B cell (primary cell): ENCODE measurements at regions of chr15 and their contacts with region 1.

Region 1: DNA sequence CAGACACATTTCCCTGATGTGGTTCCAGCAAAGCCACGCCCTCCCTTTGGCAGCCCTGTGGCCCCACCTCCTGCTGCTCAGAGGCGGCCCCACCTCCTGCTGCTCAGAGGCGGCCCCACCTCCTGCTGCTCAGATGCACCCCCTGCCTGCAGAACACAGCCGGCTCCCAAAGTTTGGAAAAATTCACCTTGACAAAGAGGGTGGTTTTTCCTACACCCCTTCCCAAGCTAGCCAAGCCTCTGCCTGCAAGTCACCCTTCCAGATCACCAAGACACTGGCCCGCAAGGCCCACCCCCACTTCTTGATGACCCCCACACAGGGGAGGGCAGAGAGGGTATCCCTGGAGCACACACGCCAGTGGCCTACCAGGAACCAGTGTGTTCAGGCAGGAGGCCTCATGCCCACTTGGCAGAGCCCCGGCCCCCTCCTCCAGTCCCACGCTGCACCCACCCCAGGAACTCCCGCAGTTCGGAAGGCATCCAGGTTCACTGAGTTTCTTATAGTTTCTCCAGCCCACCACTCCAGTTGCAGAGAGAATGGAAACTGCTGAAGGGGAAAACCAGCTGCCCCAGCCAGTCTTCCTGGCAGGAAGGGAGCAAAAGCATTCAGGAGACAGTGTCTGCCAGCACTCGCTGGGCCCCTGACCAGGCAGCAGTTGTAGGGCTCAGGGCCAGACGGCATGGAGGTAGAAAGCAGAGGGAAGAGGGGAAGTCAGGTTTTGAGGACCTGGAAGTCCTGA is 2.3 kb upstream of the HAPLN3 start:
- DNase-seq: peak; percentile 44
- ATAC-seq: peak; percentile 70
- H3K4me3 ChIP-seq: no peak overlapping the region
- H3K4me3 Mint-ChIP-seq: no peak overlapping the region
- H3K27ac ChIP-seq: no peak overlapping the region
- H3K27ac Mint-ChIP-seq: no peak overlapping the region
- H3K4me1 ChIP-seq: peaks cover 12 to 22% of the 10 kb centered on the region in 2 donors
- H3K4me1 Mint-ChIP-seq: peaks cover 14% of the 10 kb centered on the region
- H3K27me3 ChIP-seq: peaks cover 0 to 15% (median 0%) of the 10 kb centered on the region in 4 experiments
- H3K27me3 Mint-ChIP-seq: peaks cover 8% of the 10 kb centered on the region
- CTCF ChIP-seq: no peak

Region 2: DNA sequence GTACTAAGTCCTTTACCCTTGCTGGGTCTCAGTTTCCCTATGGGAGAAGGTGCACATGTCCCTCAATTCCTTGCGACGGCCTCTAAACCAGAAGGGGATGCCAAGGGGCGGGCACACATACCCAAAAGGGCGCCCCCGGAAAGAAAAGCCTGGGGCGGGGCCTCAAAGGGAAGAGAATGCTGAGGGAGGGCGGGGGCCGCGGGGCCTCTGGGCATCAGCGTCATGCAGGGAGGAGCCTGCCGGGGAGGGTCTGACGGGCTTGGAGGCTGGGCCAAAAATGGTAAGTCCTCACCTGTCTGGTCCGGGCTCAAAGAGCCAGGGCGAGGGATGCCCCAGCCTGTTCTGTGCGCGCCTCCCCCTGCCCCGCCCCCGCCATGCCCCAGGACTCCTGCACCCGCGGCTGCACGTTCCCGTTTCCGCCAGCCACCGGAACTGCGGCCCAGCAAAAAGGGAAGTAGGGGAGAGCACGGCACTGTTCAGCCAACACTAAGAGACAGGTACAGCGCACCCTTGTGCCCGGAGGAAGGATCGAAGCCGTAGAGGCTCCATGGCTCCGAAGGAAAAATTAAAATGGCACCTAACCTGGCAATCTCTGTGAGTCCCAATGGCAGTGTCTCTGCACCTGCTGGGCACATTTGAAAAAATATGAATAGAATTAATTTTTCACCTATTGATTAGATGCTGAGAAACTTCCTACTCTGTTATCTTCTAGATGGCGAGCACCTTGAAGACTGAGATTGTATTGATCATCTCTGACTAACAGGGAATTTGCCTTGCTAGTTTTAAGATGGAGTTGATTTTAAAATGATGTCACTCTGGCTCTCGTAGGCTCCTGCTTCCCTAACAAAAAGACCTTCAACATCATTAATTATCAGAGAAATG is 351.1 kb before region 1 on chr15 and contains the start of gene DET1:
- CTCF ChIA-PET with region 1: no interaction called
- POLR2A ChIA-PET with region 1: no interaction called
- intact Hi-C with region 1: loop called (anchors 5 kb)
- DNase-seq: peak; percentile 96
- ATAC-seq: peak; percentile 89
- H3K4me3 ChIP-seq: peak within 1 kb of the TSS; percentile 63 to 81 (median 67)
- H3K4me3 Mint-ChIP-seq: peak within 1 kb of the TSS; percentile 96
- H3K27ac ChIP-seq: peak within 1 kb of the TSS; percentile 79 to 80
- H3K27ac Mint-ChIP-seq: peak within 1 kb of the TSS; percentile 97
- H3K4me1 ChIP-seq: peaks cover 4 to 6% of the 10 kb centered on the region in 2 donors
- H3K4me1 Mint-ChIP-seq: peaks cover 18% of the 10 kb centered on the region
- H3K27me3 ChIP-seq: no peaks in the 10 kb centered on the region
- H3K27me3 Mint-ChIP-seq: no peaks in the 10 kb centered on the region
- CTCF ChIP-seq: peak; percentile 76
- total RNA-seq, gene DET1: 10.1 and 14.1 TPM in 2 replicates

Region 3: GRCh38 chr15:88913017-88913849 is 15.6 kb after region 1 on chr15 and contains the start of gene MFGE8:
- CTCF ChIA-PET with region 1: interaction called, 6 read pairs
- POLR2A ChIA-PET with region 1: no interaction called
- intact Hi-C with region 1: loop called (anchors 1 kb)
- DNase-seq: peak; percentile 70
- ATAC-seq: peak; percentile 85
- H3K4me3 ChIP-seq: peak within 1 kb of the TSS; percentile 53 to 73 (median 59)
- H3K4me3 Mint-ChIP-seq: peak within 1 kb of the TSS; percentile 96
- H3K27ac ChIP-seq: no peak within 1 kb of the TSS
- H3K27ac Mint-ChIP-seq: peak within 1 kb of the TSS; percentile 75
- H3K4me1 ChIP-seq: peaks cover 4 to 15% of the 10 kb centered on the region in 2 donors
- H3K4me1 Mint-ChIP-seq: peaks cover 21% of the 10 kb centered on the region
- H3K27me3 ChIP-seq: no peaks in the 10 kb centered on the region
- H3K27me3 Mint-ChIP-seq: peaks cover 15% of the 10 kb centered on the region
- CTCF ChIP-seq: no peak
- total RNA-seq, gene MFGE8: 26.6 and 28.8 TPM in 2 replicates

Region 4: DNA sequence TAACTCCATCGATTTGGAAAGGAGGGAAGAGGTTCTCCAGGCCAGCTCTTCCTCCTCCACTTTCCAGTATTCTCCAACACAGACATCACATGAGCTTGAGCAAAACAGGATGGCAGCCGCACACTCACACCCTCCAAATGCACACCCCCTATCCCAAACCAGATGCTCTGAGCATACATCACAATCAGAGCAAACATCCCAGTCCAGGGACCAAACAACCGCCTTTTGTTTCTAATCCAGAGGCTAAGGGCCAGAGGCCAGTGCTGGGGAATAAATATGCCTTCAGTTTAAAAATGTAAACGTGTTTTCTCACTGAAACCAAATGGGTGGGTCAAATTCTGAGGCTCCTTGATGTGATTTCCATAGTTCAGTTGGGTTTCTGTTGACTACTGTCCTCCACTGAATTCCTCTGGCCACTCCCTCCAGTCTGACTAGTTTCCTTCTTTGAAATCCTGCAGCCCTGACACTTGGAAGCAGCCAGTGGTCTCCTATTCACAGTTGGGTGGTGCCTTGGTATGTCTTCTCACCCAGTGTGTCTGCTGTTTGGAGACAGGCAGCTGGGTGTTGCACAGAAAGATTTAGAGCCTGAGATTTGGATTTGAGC is 34.7 kb after region 1 on chr15:
- CTCF ChIA-PET with region 1: no interaction called
- POLR2A ChIA-PET with region 1: no interaction called
- intact Hi-C with region 1: no loop called
- DNase-seq: no peak
- ATAC-seq: no peak
- H3K4me3 ChIP-seq: no peak overlapping the region
- H3K4me3 Mint-ChIP-seq: no peak overlapping the region
- H3K27ac ChIP-seq: no peak overlapping the region
- H3K27ac Mint-ChIP-seq: no peak overlapping the region
- H3K4me1 ChIP-seq: no peaks in the 10 kb centered on the region
- H3K4me1 Mint-ChIP-seq: no peaks in the 10 kb centered on the region
- H3K27me3 ChIP-seq: peaks cover 0 to 13% (median 4%) of the 10 kb centered on the region in 4 experiments
- H3K27me3 Mint-ChIP-seq: peaks cover 52% of the 10 kb centered on the region
- CTCF ChIP-seq: no peak

Region 5: GRCh38 chr15:89081878-89082277 is 184.3 kb after region 1 on chr15:
- CTCF ChIA-PET with region 1: no interaction called
- POLR2A ChIA-PET with region 1: no interaction called
- intact Hi-C with region 1: no loop called
- DNase-seq: no peak
- ATAC-seq: no peak
- H3K4me3 ChIP-seq: no peak overlapping the region
- H3K4me3 Mint-ChIP-seq: no peak overlapping the region
- H3K27ac ChIP-seq: no peak overlapping the region
- H3K27ac Mint-ChIP-seq: no peak overlapping the region
- H3K4me1 ChIP-seq: no peaks in the 10 kb centered on the region
- H3K4me1 Mint-ChIP-seq: no peaks in the 10 kb centered on the region
- H3K27me3 ChIP-seq: peaks cover 0 to 2% (median 0%) of the 10 kb centered on the region in 4 experiments
- H3K27me3 Mint-ChIP-seq: peaks cover 25% of the 10 kb centered on the region
- CTCF ChIP-seq: no peak

Region 6: GRCh38 chr15:89356634-89357298 is 459.1 kb after region 1 on chr15:
- CTCF ChIA-PET with region 1: no interaction called
- POLR2A ChIA-PET with region 1: no interaction called
- intact Hi-C with region 1: no loop called
- DNase-seq: no peak
- ATAC-seq: no peak
- H3K4me3 ChIP-seq: no peak overlapping the region
- H3K4me3 Mint-ChIP-seq: no peak overlapping the region
- H3K27ac ChIP-seq: no peak overlapping the region
- H3K27ac Mint-ChIP-seq: peak overlapping the region; percentile 22
- H3K4me1 ChIP-seq: peaks cover 18 to 30% of the 10 kb centered on the region in 2 donors
- H3K4me1 Mint-ChIP-seq: peaks cover 14% of the 10 kb centered on the region
- H3K27me3 ChIP-seq: peaks cover 0 to 70% (median 42%) of the 10 kb centered on the region in 4 experiments
- H3K27me3 Mint-ChIP-seq: peaks cover 70% of the 10 kb centered on the region
- CTCF ChIP-seq: peak; percentile 44